Activated naive CD4-positive, alpha-beta T cell treated with anti-CD3 and anti-CD28 coated beads for 36 hours (primary cell): ENCODE measurements at regions of chr10 and their contacts with region 1.

Region 1: GRCh38 chr10:87761892-87762291 is 56.1 kb downstream of the ATAD1 start:
- DNase-seq: peak; percentile 77
- H3K4me3 Mint-ChIP-seq: no peak overlapping the region
- H3K27ac Mint-ChIP-seq: peak overlapping the region; percentile 86
- H3K4me1 Mint-ChIP-seq: peaks cover 37% of the 10 kb centered on the region
- H3K27me3 Mint-ChIP-seq: no peaks in the 10 kb centered on the region

Region 2: GRCh38 chr10:87646939-87647338 is 115.0 kb before region 1 on chr10:
- CTCF ChIA-PET with region 1: no interaction called
- intact Hi-C with region 1: loop called (anchors 1 kb)
- DNase-seq: peak; percentile 42
- H3K4me3 Mint-ChIP-seq: no peak overlapping the region
- H3K27ac Mint-ChIP-seq: no peak overlapping the region
- H3K4me1 Mint-ChIP-seq: peaks cover 20% of the 10 kb centered on the region
- H3K27me3 Mint-ChIP-seq: peaks cover 4% of the 10 kb centered on the region

Region 3: DNA sequence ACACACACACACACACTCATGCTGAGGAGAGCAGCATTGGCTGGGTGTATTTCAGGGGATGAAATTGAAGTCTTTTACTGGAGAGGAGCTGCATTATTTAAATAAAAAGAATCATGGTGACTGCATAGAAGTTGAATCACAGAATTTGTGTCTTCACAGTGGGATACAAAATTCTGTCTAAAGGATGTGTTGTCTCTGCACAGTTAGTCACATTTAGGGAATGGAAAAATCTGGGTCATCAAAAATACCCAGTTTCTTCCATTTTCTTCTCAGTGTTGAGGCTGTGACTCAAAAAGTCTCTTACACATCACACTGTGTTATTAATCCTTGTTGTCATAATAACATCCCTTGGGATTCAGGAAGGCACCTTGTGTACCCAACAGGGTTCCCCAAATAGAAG is 91.3 kb before region 1 on chr10:
- CTCF ChIA-PET with region 1: no interaction called
- intact Hi-C with region 1: loop called (anchors 2 kb)
- DNase-seq: no peak
- H3K4me3 Mint-ChIP-seq: no peak overlapping the region
- H3K27ac Mint-ChIP-seq: no peak overlapping the region
- H3K4me1 Mint-ChIP-seq: peaks cover 8% of the 10 kb centered on the region
- H3K27me3 Mint-ChIP-seq: peaks cover 8% of the 10 kb centered on the region

Region 4: DNA sequence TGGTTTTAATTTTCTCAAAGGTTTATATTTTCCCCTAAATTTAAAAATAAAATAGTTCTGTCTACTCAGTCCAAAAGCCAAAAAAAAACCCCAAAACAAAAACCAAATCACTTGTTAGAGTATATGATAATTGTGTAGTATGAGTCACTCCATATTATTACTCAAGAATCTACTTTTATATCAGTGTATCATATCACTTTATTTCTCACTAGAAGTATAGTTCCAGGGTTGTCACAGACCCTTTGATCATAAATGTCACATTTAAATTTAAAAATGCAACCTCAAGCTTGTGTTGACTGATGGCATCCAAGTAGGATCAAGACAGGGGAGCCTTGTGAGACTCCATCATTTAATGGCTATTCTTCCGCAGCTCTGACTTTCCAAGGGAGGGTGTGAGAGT is 41.2 kb before region 1 on chr10:
- CTCF ChIA-PET with region 1: no interaction called
- intact Hi-C with region 1: loop called (anchors 1 kb)
- DNase-seq: no peak
- H3K4me3 Mint-ChIP-seq: no peak overlapping the region
- H3K27ac Mint-ChIP-seq: no peak overlapping the region
- H3K4me1 Mint-ChIP-seq: peaks cover 6% of the 10 kb centered on the region
- H3K27me3 Mint-ChIP-seq: peaks cover 2% of the 10 kb centered on the region

Region 5: GRCh38 chr10:88152720-88153119 is 390.8 kb after region 1 on chr10:
- CTCF ChIA-PET with region 1: no interaction called
- intact Hi-C with region 1: loop called (anchors 5 kb)
- DNase-seq: peak; percentile 76
- H3K4me3 Mint-ChIP-seq: no peak overlapping the region
- H3K27ac Mint-ChIP-seq: peak overlapping the region; percentile 86
- H3K4me1 Mint-ChIP-seq: peaks cover 22% of the 10 kb centered on the region
- H3K27me3 Mint-ChIP-seq: no peaks in the 10 kb centered on the region